Heart right ventricle (tissue), 16 donors: ENCODE measurements at regions of chr12 and their contacts with region 1.

Region 1: DNA sequence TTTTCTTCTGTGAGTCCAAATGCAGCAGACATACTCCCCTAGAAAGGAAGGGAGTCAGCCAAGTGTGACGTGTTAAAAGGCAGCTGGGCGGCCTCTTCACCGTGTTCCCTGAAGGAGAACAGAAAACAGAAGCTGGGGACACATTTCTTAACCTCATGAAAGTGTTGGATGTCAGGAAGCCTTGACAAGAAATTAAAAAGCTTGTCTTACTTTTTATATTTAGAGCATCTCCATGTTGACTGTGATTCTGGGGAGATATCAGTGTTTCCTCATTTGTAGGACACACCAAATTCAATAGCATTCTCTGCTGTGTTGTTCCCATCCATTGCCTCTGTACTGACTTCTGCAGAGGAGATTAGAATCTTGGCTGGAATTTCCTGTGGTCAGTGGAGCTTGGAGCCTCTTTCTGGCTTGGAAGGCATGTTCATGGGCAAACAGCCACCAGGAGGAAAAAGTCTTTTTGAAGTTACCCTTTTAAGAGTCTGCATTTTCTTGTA is 93.7 kb downstream of the RMST start:
- DNase-seq: peak; percentile 16 to 46
- ATAC-seq: peak; percentile 65 to 93 (median 82)
- H3K4me3 ChIP-seq: no peak overlapping the region
- H3K27ac ChIP-seq: peak overlapping the region in 9 of 10 donors; percentile 17 to 70 (median 63)
- H3K4me1 ChIP-seq: peaks cover 0 to 18% (median 0%) of the 10 kb centered on the region in 9 donors
- H3K27me3 ChIP-seq: no peaks in the 10 kb centered on the region
- CTCF ChIP-seq: peak in 1 of 9 donors; percentile 9

Region 2: DNA sequence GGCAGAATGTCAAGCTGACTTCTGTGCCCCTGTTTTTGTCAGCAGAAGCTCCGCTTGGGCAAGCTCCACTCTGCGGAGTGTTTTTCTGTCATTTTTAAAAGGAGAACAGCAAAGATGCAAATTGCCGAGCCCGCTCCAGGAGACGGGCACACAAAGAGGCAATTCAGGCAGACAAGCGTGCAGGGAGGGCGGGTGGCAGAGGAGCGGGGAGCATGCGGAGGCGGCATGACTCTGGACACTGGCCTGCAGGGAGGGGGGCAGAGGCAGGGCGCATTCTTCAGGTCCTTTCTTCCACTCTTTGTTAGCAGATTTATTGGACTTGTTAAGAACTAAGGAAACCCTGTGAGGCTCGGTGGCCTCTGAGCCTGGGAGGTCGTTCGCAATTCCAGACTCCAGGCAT is 281.1 kb before region 1 on chr12:
- intact Hi-C with region 1: no loop called
- DNase-seq: no peak
- ATAC-seq: no peak
- H3K4me3 ChIP-seq: no peak overlapping the region
- H3K27ac ChIP-seq: no peak overlapping the region
- H3K4me1 ChIP-seq: no peaks in the 10 kb centered on the region
- H3K27me3 ChIP-seq: peaks cover 0 to 22% (median 7%) of the 10 kb centered on the region in 7 donors
- CTCF ChIP-seq: no peak

Region 3: GRCh38 chr12:98154850-98155249 is 598.5 kb after region 1 on chr12:
- intact Hi-C with region 1: loop called in 1 of 10 experiments (anchors 10 kb)
- DNase-seq: peak in 1 of 2 donors; percentile 11
- ATAC-seq: peak in 3 of 8 donors; percentile 61 to 70 (median 62)
- H3K4me3 ChIP-seq: no peak overlapping the region
- H3K27ac ChIP-seq: no peak overlapping the region
- H3K4me1 ChIP-seq: peaks cover 0 to 9% (median 0%) of the 10 kb centered on the region in 9 donors
- H3K27me3 ChIP-seq: no peaks in the 10 kb centered on the region
- CTCF ChIP-seq: peak in 8 of 9 donors; percentile 15 to 69 (median 50)